CD4-positive, alpha-beta memory T cell (primary cell): ENCODE measurements at regions of chr2 and their contacts with region 1.

Region 1: DNA sequence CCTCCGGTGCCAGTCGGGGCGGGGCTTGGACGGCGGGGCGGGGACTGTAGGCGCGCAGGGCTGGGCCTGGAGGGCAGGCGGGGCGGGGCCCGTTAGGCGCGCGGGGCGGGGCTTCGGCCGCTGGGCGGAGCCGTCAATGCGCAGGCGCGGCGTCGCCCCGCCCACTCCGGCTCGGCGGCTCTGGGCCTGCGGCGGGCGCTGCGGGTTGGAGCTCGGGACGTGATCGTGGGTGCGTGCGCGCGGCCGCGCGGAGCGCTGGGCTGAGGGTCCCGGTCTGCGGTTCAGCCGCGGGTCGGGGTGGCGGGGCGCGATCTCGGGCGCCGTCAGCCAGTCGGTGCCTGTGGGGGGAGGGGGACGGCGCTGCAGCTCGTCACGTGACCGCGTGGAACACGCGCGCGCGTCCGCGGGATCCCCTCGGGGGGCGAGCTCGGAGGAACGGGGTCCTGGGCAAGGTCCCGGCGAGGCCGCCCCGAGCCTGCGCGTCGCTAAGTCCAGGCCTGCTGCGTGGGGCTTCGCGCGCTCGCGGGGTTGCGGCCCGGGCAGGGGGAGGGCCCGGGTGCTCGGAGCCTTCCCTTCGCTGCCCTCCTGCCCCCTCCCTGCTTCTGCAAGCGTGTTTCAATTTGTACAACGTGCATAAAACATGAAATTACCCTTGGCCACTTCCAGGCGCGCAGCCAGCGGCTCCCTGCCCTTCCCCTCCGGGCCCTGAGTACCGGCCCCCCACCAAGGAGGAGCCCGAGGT is at the start of gene D2HGDH:
- DNase-seq: peak; percentile 89 to 95 (median 91)
- H3K4me3 ChIP-seq: peak within 1 kb of the TSS; percentile 34 to 93
- H3K4me3 Mint-ChIP-seq: peak within 1 kb of the TSS; percentile 79 to 89 (median 85)
- H3K27ac ChIP-seq: peak within 1 kb of the TSS; percentile 67
- H3K27ac Mint-ChIP-seq: peak within 1 kb of the TSS; percentile 57 to 90 (median 79)
- H3K4me1 ChIP-seq: peaks cover 17% of the 10 kb centered on the region
- H3K4me1 Mint-ChIP-seq: peaks cover 16 to 54% (median 30%) of the 10 kb centered on the region in 4 donors
- H3K27me3 ChIP-seq: no peaks in the 10 kb centered on the region
- H3K27me3 Mint-ChIP-seq: no peaks in the 10 kb centered on the region
- total RNA-seq, gene D2HGDH: 48.7 to 53.9 TPM

Region 2: GRCh38 chr2:240615820-240616547 is 1118.7 kb before region 1 on chr2:
- CTCF ChIA-PET with region 1: no interaction called
- POLR2A ChIA-PET with region 1: no interaction called
- intact Hi-C with region 1: no loop called
- DNase-seq: no peak
- H3K4me3 ChIP-seq: no peak overlapping the region
- H3K4me3 Mint-ChIP-seq: no peak overlapping the region
- H3K27ac ChIP-seq: no peak overlapping the region
- H3K27ac Mint-ChIP-seq: peak overlapping the region in 1 of 7 donors; percentile 32
- H3K4me1 ChIP-seq: peaks cover 29% of the 10 kb centered on the region
- H3K4me1 Mint-ChIP-seq: peaks cover 9 to 12% (median 12%) of the 10 kb centered on the region in 4 donors
- H3K27me3 ChIP-seq: no peaks in the 10 kb centered on the region
- H3K27me3 Mint-ChIP-seq: no peaks in the 10 kb centered on the region

Region 3: DNA sequence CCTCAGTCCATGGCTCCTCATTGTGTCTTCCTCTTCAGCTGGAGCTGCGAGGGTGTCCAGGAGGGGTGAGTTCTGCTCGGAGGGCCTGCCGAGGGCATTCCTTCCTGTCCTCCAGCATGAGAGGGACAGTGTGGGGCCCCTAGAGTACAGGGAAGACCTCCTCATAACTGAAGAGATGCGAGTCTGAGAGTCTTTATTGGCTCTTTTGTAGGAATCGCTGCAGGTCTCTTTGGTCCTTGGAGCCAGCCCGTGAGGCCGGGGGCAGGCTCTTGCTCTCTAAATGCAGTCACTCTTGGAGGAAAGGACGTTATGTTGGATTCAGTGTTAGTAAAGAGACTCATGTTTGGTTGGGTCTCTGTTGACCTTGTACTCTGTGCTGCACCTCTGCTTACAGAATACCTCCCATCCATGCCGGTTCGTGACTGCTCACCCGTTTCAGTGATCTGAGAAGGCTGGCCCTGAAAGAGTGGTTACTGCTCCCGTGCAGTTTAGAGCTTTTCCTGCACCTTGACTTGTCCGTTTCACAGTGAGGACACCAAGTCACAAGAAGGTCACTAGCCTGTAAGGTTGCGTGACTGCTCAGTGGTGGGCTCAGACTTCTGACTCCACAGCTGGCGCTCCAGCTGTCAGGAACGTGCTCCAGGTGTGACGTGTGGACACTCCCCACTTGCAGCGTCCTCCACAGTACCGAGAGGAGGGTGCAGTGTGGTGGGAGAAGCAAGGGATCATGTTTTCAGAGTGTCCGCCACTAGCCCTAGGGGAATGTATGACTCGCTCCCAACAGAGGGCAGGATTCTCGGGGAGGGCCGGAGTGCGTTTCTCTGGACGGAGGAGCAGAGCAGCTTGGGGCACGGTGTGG is 89.4 kb before region 1 on chr2:
- CTCF ChIA-PET with region 1: no interaction called
- POLR2A ChIA-PET with region 1: no interaction called
- intact Hi-C with region 1: no loop called
- DNase-seq: no peak
- H3K4me3 ChIP-seq: no peak overlapping the region
- H3K4me3 Mint-ChIP-seq: no peak overlapping the region
- H3K27ac ChIP-seq: no peak overlapping the region
- H3K27ac Mint-ChIP-seq: no peak overlapping the region
- H3K4me1 ChIP-seq: peaks cover 4% of the 10 kb centered on the region
- H3K4me1 Mint-ChIP-seq: peaks cover 20 to 58% (median 29%) of the 10 kb centered on the region in 4 donors
- H3K27me3 ChIP-seq: no peaks in the 10 kb centered on the region
- H3K27me3 Mint-ChIP-seq: no peaks in the 10 kb centered on the region

Region 4: DNA sequence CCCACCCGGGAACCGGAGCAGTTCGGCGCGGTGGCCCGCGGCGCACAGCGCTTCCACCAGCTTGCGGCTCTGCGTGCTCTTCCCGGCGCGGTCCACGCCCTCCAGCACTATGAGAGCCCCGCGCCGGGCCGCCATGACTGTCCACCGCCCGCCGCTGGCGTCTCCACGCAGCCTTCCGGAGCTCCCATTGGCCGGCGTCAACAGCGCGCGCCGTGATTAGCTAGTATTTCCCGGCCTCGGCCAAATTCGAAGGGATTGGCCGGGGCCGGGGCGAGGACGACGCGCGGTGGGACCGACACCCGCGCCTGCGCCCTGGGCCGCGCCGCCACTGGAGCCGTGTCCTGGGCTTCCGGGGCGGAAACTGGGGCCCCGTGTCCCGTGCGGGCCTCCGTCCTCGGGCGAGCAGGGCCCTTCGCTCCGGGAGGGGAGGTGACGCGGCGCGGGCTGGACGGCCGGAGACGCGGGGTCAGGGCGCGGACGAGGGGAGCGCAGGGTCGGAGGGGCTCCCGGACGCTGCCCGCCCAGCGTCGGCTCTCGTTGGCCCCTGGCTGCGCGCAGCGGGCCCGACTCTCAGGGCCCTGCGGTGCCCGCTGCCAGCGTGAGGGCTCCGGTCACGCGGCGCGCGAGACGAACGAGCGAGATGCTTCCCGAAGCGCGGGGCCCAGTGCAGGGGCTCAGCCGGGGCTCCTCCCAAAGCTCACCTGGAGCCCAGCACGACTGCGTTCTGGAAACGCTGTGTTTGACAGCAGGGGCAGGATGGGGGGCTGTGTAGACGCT is 47.8 kb before region 1 on chr2 and contains the start of gene DTYMK:
- CTCF ChIA-PET with region 1: interaction called, 4 read pairs
- POLR2A ChIA-PET with region 1: interaction called, 18 read pairs
- intact Hi-C with region 1: loop called (anchors 2 kb)
- DNase-seq: peak; percentile 95 to 98 (median 97)
- H3K4me3 ChIP-seq: peak within 1 kb of the TSS; percentile 57 to 89
- H3K4me3 Mint-ChIP-seq: peak within 1 kb of the TSS; percentile 87 to 96 (median 94)
- H3K27ac ChIP-seq: peak within 1 kb of the TSS; percentile 80
- H3K27ac Mint-ChIP-seq: peak within 1 kb of the TSS; percentile 85 to 93 (median 91)
- H3K4me1 ChIP-seq: peaks cover 32% of the 10 kb centered on the region
- H3K4me1 Mint-ChIP-seq: peaks cover 14 to 40% (median 26%) of the 10 kb centered on the region in 4 donors
- H3K27me3 ChIP-seq: no peaks in the 10 kb centered on the region
- H3K27me3 Mint-ChIP-seq: no peaks in the 10 kb centered on the region
- total RNA-seq, gene DTYMK: 18.8 TPM

Region 5: DNA sequence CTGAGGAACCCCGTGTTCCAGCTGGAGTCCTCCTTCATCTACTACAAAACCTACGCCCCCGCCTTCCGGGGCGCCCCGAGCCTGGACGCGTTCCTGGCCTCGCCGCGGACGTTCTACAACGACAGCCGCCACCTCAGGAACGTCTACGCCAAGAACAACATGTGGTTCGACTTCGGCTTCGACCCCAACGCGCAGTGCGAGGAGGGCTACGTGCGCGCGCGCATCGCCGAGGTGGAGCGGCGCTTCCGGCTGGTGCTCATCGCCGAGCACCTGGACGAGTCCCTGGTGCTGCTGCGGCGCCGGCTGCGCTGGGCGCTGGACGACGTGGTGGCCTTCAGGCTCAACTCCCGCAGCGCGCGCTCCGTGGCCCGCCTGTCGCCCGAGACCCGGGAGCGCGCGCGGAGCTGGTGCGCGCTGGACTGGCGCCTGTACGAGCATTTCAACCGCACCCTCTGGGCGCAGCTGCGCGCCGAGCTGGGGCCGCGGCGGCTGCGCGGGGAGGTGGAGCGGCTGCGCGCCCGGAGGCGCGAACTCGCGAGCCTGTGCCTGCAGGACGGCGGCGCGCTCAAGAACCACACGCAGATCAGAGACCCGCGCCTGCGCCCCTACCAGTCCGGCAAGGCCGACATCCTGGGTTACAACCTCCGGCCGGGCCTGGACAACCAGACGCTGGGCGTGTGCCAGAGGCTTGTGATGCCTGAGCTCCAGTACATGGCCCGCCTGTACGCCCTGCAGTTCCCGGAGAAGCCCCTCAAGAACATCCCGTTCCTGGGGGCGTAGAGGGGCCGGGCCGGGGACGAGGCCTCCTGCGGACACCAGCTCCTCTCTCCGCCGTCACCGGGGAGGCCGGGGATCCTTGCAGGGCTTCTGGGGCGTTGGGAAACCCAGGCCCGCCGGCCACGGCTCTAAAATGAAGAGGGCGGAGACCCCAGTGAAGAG is 69.0 kb after region 1 on chr2:
- CTCF ChIA-PET with region 1: no interaction called
- POLR2A ChIA-PET with region 1: interaction called, 16 read pairs
- intact Hi-C with region 1: no loop called
- DNase-seq: peak; percentile 41 to 58 (median 48)
- H3K4me3 ChIP-seq: peak overlapping the region; percentile 36 to 47
- H3K4me3 Mint-ChIP-seq: peak overlapping the region; percentile 51 to 79 (median 71)
- H3K27ac ChIP-seq: no peak overlapping the region
- H3K27ac Mint-ChIP-seq: peak overlapping the region in 4 of 7 donors; percentile 35 to 87 (median 72)
- H3K4me1 ChIP-seq: peaks cover 20% of the 10 kb centered on the region
- H3K4me1 Mint-ChIP-seq: peaks cover 2 to 12% (median 8%) of the 10 kb centered on the region in 4 donors
- H3K27me3 ChIP-seq: no peaks in the 10 kb centered on the region
- H3K27me3 Mint-ChIP-seq: no peaks in the 10 kb centered on the region

Region 6: DNA sequence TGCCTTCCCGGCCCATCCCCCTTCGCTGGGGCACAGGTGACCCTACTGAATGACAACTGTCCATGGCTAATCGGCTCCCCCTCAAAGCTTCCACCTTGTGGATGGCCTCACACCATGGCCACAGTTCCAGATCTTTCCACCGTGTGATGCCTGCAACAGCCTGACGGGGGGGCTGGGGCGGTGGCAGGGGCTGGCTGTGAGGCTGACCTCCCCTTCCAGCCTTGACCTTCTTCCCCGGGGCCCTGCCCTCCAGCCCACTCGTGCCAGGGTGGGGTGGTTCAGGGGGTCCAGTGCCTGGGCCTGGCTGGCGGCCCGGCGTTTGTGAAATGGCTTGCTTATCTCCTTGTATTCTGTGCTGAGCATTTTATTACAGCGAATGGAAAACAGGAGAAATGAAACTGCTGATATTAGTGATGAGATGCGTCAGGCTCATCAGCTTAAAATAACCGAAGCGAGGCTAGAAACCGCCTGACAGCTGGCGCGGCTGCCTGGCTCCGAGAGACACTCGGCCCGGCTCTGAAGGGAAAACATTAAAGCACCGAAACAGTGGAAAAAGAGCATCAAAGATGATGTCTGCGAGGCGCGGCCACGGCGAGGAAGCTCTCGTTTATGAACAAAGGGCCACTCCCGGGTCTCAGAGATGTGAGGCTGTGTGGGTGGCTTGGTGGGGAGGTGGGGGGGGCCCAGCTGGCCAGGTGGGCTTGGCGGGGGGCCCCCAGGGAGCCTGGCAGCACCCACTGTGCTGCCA is 125.0 kb after region 1 on chr2:
- CTCF ChIA-PET with region 1: no interaction called
- POLR2A ChIA-PET with region 1: interaction called, 11 read pairs
- intact Hi-C with region 1: no loop called
- DNase-seq: peak; percentile 26 to 71 (median 39)
- H3K4me3 ChIP-seq: peak overlapping the region; percentile 23 to 68
- H3K4me3 Mint-ChIP-seq: peak overlapping the region; percentile 87 to 96 (median 90)
- H3K27ac ChIP-seq: peak overlapping the region; percentile 64
- H3K27ac Mint-ChIP-seq: peak overlapping the region; percentile 92 to 98 (median 96)
- H3K4me1 ChIP-seq: peaks cover 84% of the 10 kb centered on the region
- H3K4me1 Mint-ChIP-seq: peaks cover 37 to 79% (median 55%) of the 10 kb centered on the region in 4 donors
- H3K27me3 ChIP-seq: no peaks in the 10 kb centered on the region
- H3K27me3 Mint-ChIP-seq: peaks cover 0 to 2% of the 10 kb centered on the region in 2 donors

Region 7: GRCh38 chr2:241865957-241866789 is 131.5 kb after region 1 on chr2:
- CTCF ChIA-PET with region 1: interaction called, 10 read pairs
- POLR2A ChIA-PET with region 1: interaction called, 13 read pairs
- intact Hi-C with region 1: no loop called
- DNase-seq: no peak
- H3K4me3 ChIP-seq: no peak overlapping the region
- H3K4me3 Mint-ChIP-seq: peak overlapping the region in 3 of 8 donors; percentile 10 to 65 (median 56)
- H3K27ac ChIP-seq: no peak overlapping the region
- H3K27ac Mint-ChIP-seq: peak overlapping the region in 4 of 7 donors; percentile 24 to 87 (median 62)
- H3K4me1 ChIP-seq: peaks cover 78% of the 10 kb centered on the region
- H3K4me1 Mint-ChIP-seq: peaks cover 54 to 80% (median 65%) of the 10 kb centered on the region in 4 donors
- H3K27me3 ChIP-seq: no peaks in the 10 kb centered on the region
- H3K27me3 Mint-ChIP-seq: peaks cover 0 to 5% of the 10 kb centered on the region in 2 donors